ENCODE measurements at regions of chr12 and their contacts with region 1.

Region 1: GRCh38 chr12:53005986-53006809 is at the start of gene EIF4B:
- DNase-seq: peak; percentile 91 to 100 (median 99)
- ATAC-seq: peak; percentile 96
- H3K4me3 ChIP-seq: peak within 1 kb of the TSS; percentile 99
- H3K4me3 Mint-ChIP-seq: peak within 1 kb of the TSS; percentile 96 to 100 (median 99)
- H3K27ac ChIP-seq: peak within 1 kb of the TSS; percentile 86
- H3K27ac Mint-ChIP-seq: peak within 1 kb of the TSS; percentile 96 to 99 (median 98)
- H3K4me1 ChIP-seq: peaks cover 32 to 36% of the 10 kb centered on the region in 2 donors
- H3K4me1 Mint-ChIP-seq: peaks cover 26 to 59% (median 46%) of the 10 kb centered on the region in 7 donors
- H3K27me3 ChIP-seq: no peaks in the 10 kb centered on the region
- H3K27me3 Mint-ChIP-seq: peaks cover 0 to 9% (median 0%) of the 10 kb centered on the region in 5 donors
- total RNA-seq, gene EIF4B: 380 to 919 (median 833) TPM

Region 2: GRCh38 chr12:52023182-52023975 is 982.8 kb before region 1 on chr12:
- CTCF ChIA-PET with region 1: interaction called, 3 read pairs
- POLR2A ChIA-PET with region 1: no interaction called
- intact Hi-C with region 1: loop called (anchors 1 to 10 kb)
- DNase-seq: peak; percentile 80 to 98 (median 90)
- ATAC-seq: peak; percentile 80
- H3K4me3 ChIP-seq: peak overlapping the region; percentile 71
- H3K4me3 Mint-ChIP-seq: peak overlapping the region; percentile 77 to 96 (median 87)
- H3K27ac ChIP-seq: peak overlapping the region; percentile 69
- H3K27ac Mint-ChIP-seq: peak overlapping the region; percentile 85 to 99 (median 93)
- H3K4me1 ChIP-seq: peaks cover 17 to 29% of the 10 kb centered on the region in 2 donors
- H3K4me1 Mint-ChIP-seq: peaks cover 34 to 49% (median 40%) of the 10 kb centered on the region in 7 donors
- H3K27me3 ChIP-seq: no peaks in the 10 kb centered on the region
- H3K27me3 Mint-ChIP-seq: peaks cover 0 to 16% (median 0%) of the 10 kb centered on the region in 5 donors

Region 3: DNA sequence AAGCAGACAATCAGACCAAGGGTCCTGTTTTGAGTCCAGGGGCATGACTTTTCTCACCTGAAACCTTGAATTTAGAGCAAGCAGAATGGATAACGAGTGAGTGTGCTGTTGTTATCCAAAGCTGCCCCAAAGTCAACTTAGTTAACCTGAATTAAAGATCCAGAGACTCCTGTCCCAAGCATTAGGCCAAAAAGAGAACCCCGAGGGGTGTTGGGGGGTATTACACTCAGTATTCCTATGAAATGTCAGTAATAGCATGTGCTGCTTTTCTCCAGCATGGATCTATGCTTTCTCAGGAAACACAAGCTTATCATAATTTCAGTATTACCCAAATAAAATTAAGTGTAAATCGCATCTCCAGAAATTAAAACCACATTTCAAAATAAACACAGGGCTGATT is 19.1 kb after region 1 on chr12:
- CTCF ChIA-PET with region 1: no interaction called
- POLR2A ChIA-PET with region 1: interaction called, 3 read pairs
- intact Hi-C with region 1: loop called in 1 of 2 experiments (anchors 2 kb)
- DNase-seq: no peak
- ATAC-seq: no peak
- H3K4me3 ChIP-seq: no peak overlapping the region
- H3K4me3 Mint-ChIP-seq: no peak overlapping the region
- H3K27ac ChIP-seq: no peak overlapping the region
- H3K27ac Mint-ChIP-seq: peak overlapping the region in 1 of 9 donors; percentile 59
- H3K4me1 ChIP-seq: no peaks in the 10 kb centered on the region
- H3K4me1 Mint-ChIP-seq: peaks cover 0 to 24% (median 1%) of the 10 kb centered on the region in 7 donors
- H3K27me3 ChIP-seq: no peaks in the 10 kb centered on the region
- H3K27me3 Mint-ChIP-seq: no peaks in the 10 kb centered on the region

Region 4: GRCh38 chr12:53180220-53180930 is 174.2 kb after region 1 on chr12 and contains the starts of genes CSAD and ZNF740:
- CTCF ChIA-PET with region 1: no interaction called
- POLR2A ChIA-PET with region 1: no interaction called
- intact Hi-C with region 1: loop called (anchors 1 kb)
- DNase-seq: peak; percentile 86 to 98 (median 97)
- ATAC-seq: peak; percentile 98
- H3K4me3 ChIP-seq: peak within 1 kb of the TSS; percentile 89
- H3K4me3 Mint-ChIP-seq: peak within 1 kb of the TSS; percentile 84 to 98 (median 92)
- H3K27ac ChIP-seq: peak within 1 kb of the TSS; percentile 92
- H3K27ac Mint-ChIP-seq: peak within 1 kb of the TSS; percentile 93 to 98 (median 97)
- H3K4me1 ChIP-seq: peaks cover 30 to 46% of the 10 kb centered on the region in 2 donors
- H3K4me1 Mint-ChIP-seq: peaks cover 44 to 57% (median 52%) of the 10 kb centered on the region in 7 donors
- H3K27me3 ChIP-seq: no peaks in the 10 kb centered on the region
- H3K27me3 Mint-ChIP-seq: no peaks in the 10 kb centered on the region
- total RNA-seq, gene CSAD: 34.1 to 76.3 (median 69.1) TPM
- total RNA-seq, gene ZNF740: 37.2 to 135 (median 49.5) TPM

Region 5: GRCh38 chr12:53379389-53380103 is 373.3 kb after region 1 on chr12:
- CTCF ChIA-PET with region 1: no interaction called
- POLR2A ChIA-PET with region 1: interaction called, 3 read pairs
- intact Hi-C with region 1: loop called (anchors 1 kb)
- DNase-seq: peak in 8 of 9 donors; percentile 54 to 100 (median 99)
- ATAC-seq: peak; percentile 85
- H3K4me3 ChIP-seq: peak overlapping the region; percentile 61
- H3K4me3 Mint-ChIP-seq: no peak overlapping the region
- H3K27ac ChIP-seq: peak overlapping the region; percentile 91
- H3K27ac Mint-ChIP-seq: no peak overlapping the region
- H3K4me1 ChIP-seq: peaks cover 37 to 40% of the 10 kb centered on the region in 2 donors
- H3K4me1 Mint-ChIP-seq: peaks cover 31 to 44% (median 37%) of the 10 kb centered on the region in 7 donors
- H3K27me3 ChIP-seq: no peaks in the 10 kb centered on the region
- H3K27me3 Mint-ChIP-seq: no peaks in the 10 kb centered on the region

Region 6: GRCh38 chr12:53625946-53626701 is 619.9 kb after region 1 on chr12 and contains the start of gene ATF7:
- CTCF ChIA-PET with region 1: no interaction called
- POLR2A ChIA-PET with region 1: no interaction called
- intact Hi-C with region 1: loop called (anchors 1 kb)
- DNase-seq: peak; percentile 95 to 100 (median 99)
- ATAC-seq: peak; percentile 97
- H3K4me3 ChIP-seq: peak within 1 kb of the TSS; percentile 92
- H3K4me3 Mint-ChIP-seq: peak within 1 kb of the TSS; percentile 97 to 100 (median 98)
- H3K27ac ChIP-seq: peak within 1 kb of the TSS; percentile 83
- H3K27ac Mint-ChIP-seq: peak within 1 kb of the TSS; percentile 95 to 99 (median 97)
- H3K4me1 ChIP-seq: peaks cover 20 to 32% of the 10 kb centered on the region in 2 donors
- H3K4me1 Mint-ChIP-seq: peaks cover 30 to 55% (median 49%) of the 10 kb centered on the region in 7 donors
- H3K27me3 ChIP-seq: no peaks in the 10 kb centered on the region
- H3K27me3 Mint-ChIP-seq: peaks cover 0 to 6% (median 0%) of the 10 kb centered on the region in 5 donors
- total RNA-seq, gene ATF7: 21.9 to 39.5 (median 30.9) TPM

Measured in naive thymus-derived CD4-positive, alpha-beta T cell (primary cell).